ENCODE measurements at regions of chr3 and their contacts with region 1.

Region 1: DNA sequence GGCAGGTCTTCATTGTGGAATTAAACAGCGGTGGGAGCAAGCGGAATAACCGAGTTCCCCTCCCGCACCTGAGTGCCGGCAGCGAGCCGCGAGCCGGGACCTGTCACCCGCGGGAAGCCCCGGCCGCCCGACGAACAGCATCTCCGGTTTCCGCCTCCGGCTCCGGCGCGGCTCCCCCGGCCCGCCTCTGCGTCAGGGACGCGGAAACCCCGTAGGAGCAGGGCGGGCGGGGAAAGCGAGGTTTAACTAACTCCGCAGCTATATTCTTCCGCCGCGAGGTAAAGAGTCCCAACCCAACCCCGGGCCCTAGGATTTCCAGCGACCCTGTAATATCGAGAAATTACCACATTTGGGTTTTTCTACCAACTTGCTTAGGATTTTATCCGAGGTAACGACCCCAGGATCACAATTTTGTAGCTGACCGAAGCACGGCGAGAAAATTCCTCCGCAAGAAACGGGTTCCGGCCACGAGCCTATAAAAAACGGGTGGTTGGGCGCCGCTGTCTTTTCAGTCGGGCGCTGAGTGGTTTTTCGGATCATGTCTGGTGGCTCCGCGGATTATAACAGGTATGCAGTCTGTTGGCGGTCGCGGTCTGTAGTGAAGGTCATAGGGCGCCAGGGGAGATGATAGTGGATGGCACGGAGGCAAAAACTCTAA is at the start of gene EIF4A2:
- DNase-seq: peak; percentile 92
- H3K4me3 Mint-ChIP-seq: peak within 1 kb of the TSS; percentile 97
- H3K27ac Mint-ChIP-seq: peak within 1 kb of the TSS; percentile 99
- H3K4me1 Mint-ChIP-seq: peaks cover 38% of the 10 kb centered on the region
- H3K27me3 Mint-ChIP-seq: no peaks in the 10 kb centered on the region
- total RNA-seq, gene EIF4A2: 390 to 393 TPM

Region 2: GRCh38 chr3:185929192-185930151 is 853.7 kb before region 1 on chr3:
- CTCF ChIA-PET with region 1: no interaction called
- POLR2A ChIA-PET with region 1: interaction called, 13 read pairs
- intact Hi-C with region 1: no loop called
- DNase-seq: no peak
- H3K4me3 Mint-ChIP-seq: peak overlapping the region; percentile 67
- H3K27ac Mint-ChIP-seq: peak overlapping the region; percentile 88
- H3K4me1 Mint-ChIP-seq: peaks cover 93% of the 10 kb centered on the region
- H3K27me3 Mint-ChIP-seq: no peaks in the 10 kb centered on the region

Region 3: GRCh38 chr3:186570096-186570940 is 212.9 kb before region 1 on chr3 and contains the start of gene DNAJB11:
- CTCF ChIA-PET with region 1: no interaction called
- POLR2A ChIA-PET with region 1: interaction called, 49 read pairs
- intact Hi-C with region 1: loop called (anchors 1 kb)
- DNase-seq: peak; percentile 100
- H3K4me3 Mint-ChIP-seq: peak within 1 kb of the TSS; percentile 95
- H3K27ac Mint-ChIP-seq: peak within 1 kb of the TSS; percentile 91
- H3K4me1 Mint-ChIP-seq: peaks cover 49% of the 10 kb centered on the region
- H3K27me3 Mint-ChIP-seq: no peaks in the 10 kb centered on the region
- total RNA-seq, gene DNAJB11: 36.9 to 39.5 TPM

Region 4: GRCh38 chr3:186772701-186773424 is 10.3 kb before region 1 on chr3:
- CTCF ChIA-PET with region 1: no interaction called
- POLR2A ChIA-PET with region 1: interaction called, 87 read pairs
- intact Hi-C with region 1: loop called (anchors 1 kb)
- DNase-seq: peak; percentile 84
- H3K4me3 Mint-ChIP-seq: peak overlapping the region; percentile 82
- H3K27ac Mint-ChIP-seq: peak overlapping the region; percentile 88
- H3K4me1 Mint-ChIP-seq: peaks cover 12% of the 10 kb centered on the region
- H3K27me3 Mint-ChIP-seq: no peaks in the 10 kb centered on the region

Region 5: DNA sequence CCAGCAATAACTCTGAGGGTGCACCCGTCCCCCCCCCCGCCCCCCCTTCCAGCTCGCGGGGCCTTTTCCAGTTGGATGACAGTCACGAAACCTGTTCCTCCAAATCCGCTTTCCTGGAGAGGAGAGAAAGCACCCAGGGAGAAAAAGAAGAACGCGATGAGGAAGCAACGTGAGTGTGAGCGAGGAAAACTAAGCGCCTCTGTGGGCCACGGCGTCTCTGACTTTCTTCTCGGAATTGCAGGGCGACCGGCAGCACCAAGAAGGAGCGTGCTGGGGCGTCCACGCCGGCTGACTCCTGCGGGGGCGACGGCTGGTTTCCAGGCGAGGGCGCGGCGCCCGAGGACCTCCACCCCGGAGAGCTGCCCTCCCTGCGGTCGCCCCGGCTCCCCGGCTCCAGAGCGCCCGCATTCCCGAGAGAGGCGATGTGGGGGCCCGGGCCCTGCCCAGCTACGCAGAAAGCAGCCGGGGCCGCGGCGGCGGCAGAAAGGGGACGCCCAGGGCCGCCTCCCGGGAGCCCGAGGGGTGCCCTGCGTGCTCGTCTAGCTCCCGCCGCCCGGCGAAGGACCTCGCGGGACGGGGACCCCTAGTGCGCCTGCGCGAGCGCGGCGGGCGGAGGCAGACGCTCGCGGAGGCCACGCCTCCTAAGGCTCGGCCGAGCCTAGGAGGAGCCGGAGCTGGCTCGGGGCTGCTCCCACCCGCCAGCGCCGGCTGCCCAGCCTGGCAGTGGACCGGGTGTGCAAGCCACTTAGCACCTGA is 44.0 kb after region 1 on chr3:
- CTCF ChIA-PET with region 1: no interaction called
- POLR2A ChIA-PET with region 1: interaction called, 14 read pairs
- intact Hi-C with region 1: loop called (anchors 5 kb)
- DNase-seq: peak; percentile 89
- H3K4me3 Mint-ChIP-seq: peak overlapping the region; percentile 83
- H3K27ac Mint-ChIP-seq: peak overlapping the region; percentile 51
- H3K4me1 Mint-ChIP-seq: peaks cover 28% of the 10 kb centered on the region
- H3K27me3 Mint-ChIP-seq: peaks cover 44% of the 10 kb centered on the region